Testis (tissue), 5 donors: ENCODE measurements at regions of chr18 and their contacts with region 1.

Region 1: DNA sequence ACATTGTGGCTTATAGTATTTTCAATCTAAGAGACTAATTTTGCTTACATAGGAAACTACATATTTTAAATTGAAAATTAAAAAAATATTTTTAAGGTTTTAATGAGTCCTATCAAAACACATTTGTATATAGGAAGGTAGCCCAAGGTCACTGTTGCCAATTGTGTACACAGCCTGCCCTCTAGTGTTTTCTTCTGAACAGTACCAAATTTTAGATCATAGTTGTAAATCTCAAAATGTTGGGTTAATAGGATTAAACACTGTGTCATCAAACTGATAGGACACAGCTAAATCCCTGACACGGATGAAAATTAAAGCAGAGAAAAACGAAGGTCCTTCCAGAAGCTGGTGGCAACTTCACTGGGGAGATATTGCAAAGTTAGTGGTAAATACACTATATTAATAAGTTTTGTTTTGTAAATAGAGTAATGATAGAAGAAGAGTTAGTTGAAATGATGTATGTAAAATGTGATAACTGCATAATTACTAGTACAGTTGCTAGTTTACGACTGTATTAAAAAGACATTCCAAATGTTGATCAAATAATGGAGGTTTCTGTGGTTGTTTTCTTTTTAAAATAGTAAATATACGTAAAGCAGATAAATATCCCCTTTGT is 19.7 kb downstream of the CLUL1 start:
- DNase-seq: no peak
- H3K4me3 ChIP-seq: no peak overlapping the region
- H3K27ac ChIP-seq: no peak overlapping the region
- H3K4me1 ChIP-seq: no peaks in the 10 kb centered on the region
- H3K27me3 ChIP-seq: no peaks in the 10 kb centered on the region
- CTCF ChIP-seq: peak; percentile 48 to 66 (median 63)
- POLR2A ChIP-seq: no peak

Region 2: GRCh38 chr18:286515-287310 is 329.8 kb before region 1 on chr18:
- intact Hi-C with region 1: loop called (anchors 10 kb)
- DNase-seq: peak; percentile 17
- H3K4me3 ChIP-seq: no peak overlapping the region
- H3K27ac ChIP-seq: no peak overlapping the region
- H3K4me1 ChIP-seq: no peaks in the 10 kb centered on the region
- H3K27me3 ChIP-seq: no peaks in the 10 kb centered on the region
- CTCF ChIP-seq: peak in 2 of 3 experiments; percentile 35 to 36
- POLR2A ChIP-seq: no peak

Region 3: GRCh38 chr18:723541-724080 is 107.1 kb after region 1 on chr18:
- intact Hi-C with region 1: no loop called
- DNase-seq: no peak
- H3K4me3 ChIP-seq: no peak overlapping the region
- H3K27ac ChIP-seq: no peak overlapping the region
- H3K4me1 ChIP-seq: no peaks in the 10 kb centered on the region
- H3K27me3 ChIP-seq: no peaks in the 10 kb centered on the region
- CTCF ChIP-seq: no peak
- POLR2A ChIP-seq: no peak